ENCODE measurements at regions of chr9 and their contacts with region 1.

Region 1: DNA sequence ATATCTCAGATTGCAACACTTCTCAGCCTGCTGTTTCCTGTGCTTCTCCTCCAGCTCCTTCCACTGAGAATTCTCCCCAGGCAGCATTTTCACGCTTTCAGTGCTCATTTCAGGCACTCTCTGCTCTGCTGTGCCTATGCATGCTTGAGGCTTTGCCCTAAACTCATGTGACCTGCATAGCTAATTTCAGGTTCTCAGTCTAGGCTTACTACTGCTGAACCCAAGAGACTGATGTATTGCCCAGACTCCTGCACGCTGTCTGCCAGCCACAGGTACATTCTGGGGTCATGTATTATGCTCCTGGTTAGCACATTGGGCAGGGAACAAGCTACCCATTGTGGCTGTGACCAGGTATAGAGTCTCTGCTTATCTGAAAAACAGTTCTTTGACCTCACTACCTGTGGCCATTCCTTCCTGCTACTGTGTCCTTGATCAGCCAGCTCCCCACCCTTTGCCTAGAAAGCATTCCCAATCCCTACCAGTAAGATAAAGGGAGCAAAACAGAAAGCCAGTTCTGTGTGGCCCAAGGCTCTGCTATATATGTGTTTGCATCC is 34.7 kb downstream of the PIP5K1B start:
- DNase-seq: peak in 1 of 10 donors; percentile 17
- H3K4me3 ChIP-seq: no peak overlapping the region
- H3K27ac ChIP-seq: peak overlapping the region in 5 of 59 donors; percentile 13 to 48 (median 28)
- H3K27me3 ChIP-seq: no peaks in the 10 kb centered on the region
- CTCF ChIP-seq: no peak

Region 2: DNA sequence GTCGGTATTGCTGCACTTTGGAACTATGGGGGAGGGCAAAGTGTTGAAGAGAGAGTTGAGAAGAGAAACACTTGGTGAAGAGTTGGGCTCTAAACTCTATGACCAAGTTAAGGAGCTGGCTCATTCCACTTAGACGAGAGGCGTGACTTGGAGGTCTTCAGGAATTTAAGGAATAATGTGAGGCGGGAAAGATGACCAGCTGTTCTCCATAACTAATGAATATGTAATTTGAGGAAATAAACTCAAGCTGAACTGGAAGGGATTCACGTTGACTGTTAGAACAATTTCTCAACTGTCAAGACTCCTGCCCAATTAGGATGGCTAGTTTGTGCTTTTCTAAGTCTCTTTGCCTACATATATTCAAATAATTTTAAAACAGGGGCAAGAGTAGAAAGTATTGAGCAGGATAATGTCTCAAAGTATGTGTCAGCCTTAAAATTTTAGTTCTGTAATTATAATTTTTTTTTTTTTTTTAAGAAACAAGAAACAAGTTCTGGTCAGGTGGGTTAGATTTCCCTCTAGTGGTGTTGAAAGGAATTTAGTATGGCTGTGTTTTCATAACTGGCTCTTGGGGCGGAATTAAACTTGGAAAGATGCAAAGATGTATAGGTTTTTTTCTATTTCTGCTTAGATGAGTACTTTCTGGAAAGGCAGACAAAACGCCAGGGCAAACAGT is 232.4 kb before region 1 on chr9:
- intact Hi-C with region 1: no loop called
- DNase-seq: no peak
- H3K4me3 ChIP-seq: no peak overlapping the region
- H3K27ac ChIP-seq: no peak overlapping the region
- H3K27me3 ChIP-seq: no peaks in the 10 kb centered on the region
- CTCF ChIP-seq: peak; percentile 45 to 80 (median 64)

Region 3: GRCh38 chr9:68802525-68803015 is 62.9 kb after region 1 on chr9:
- intact Hi-C with region 1: loop called in 1 of 2 experiments (anchors 10 kb)
- DNase-seq: no peak
- H3K4me3 ChIP-seq: no peak overlapping the region
- H3K27ac ChIP-seq: peak overlapping the region in 1 of 59 donors; percentile 6
- H3K27me3 ChIP-seq: no peaks in the 10 kb centered on the region
- CTCF ChIP-seq: no peak

Region 4: GRCh38 chr9:68822596-68823165 is 83.0 kb after region 1 on chr9:
- intact Hi-C with region 1: no loop called
- DNase-seq: peak in 1 of 10 donors; percentile 83
- H3K4me3 ChIP-seq: no peak overlapping the region
- H3K27ac ChIP-seq: no peak overlapping the region
- H3K27me3 ChIP-seq: no peaks in the 10 kb centered on the region
- CTCF ChIP-seq: no peak

Measured in dorsolateral prefrontal cortex (tissue), 120 donors.